Heart right ventricle (tissue), 16 donors: ENCODE measurements at regions of chr9 and their contacts with region 1.

Region 1: GRCh38 chr9:130932255-130933079 is 6.6 kb downstream of the FIBCD1 start:
- DNase-seq: peak; percentile 74 to 79
- ATAC-seq: peak; percentile 90 to 97 (median 91)
- H3K4me3 ChIP-seq: peak overlapping the region in 3 of 10 donors; percentile 12 to 19 (median 15)
- H3K27ac ChIP-seq: peak overlapping the region; percentile 43 to 83 (median 76)
- H3K4me1 ChIP-seq: peaks cover 0 to 47% (median 14%) of the 10 kb centered on the region in 9 donors
- H3K27me3 ChIP-seq: peaks cover 12 to 68% (median 51%) of the 10 kb centered on the region in 7 donors
- CTCF ChIP-seq: peak in 8 of 9 donors; percentile 24 to 61 (median 38)

Region 2: DNA sequence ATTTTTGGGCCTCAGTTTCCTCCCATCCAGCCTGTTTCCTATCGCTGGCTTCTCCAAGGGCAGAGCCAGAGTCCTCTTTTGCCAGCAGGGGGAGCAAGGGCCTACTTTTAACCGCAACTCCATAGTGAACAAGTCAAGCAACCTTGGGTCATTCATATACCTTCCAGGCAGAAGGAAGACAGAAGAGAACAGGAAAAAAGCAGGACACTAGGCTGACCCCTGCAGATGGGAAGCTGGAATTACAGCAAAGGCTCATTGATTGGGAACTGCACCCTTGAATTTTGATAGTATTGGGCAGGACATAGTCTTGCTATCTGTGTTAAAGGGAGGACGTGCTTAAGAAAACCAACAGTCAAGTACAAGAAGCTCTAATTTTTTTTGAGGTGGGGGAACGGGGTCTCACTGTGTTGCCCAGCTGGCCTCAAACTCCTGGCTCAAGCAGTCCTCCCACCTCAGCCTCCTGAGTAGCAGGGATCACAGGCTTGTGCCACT is 65.9 kb before region 1 on chr9:
- intact Hi-C with region 1: loop called in 8 of 10 experiments (anchors 1 to 5 kb)
- DNase-seq: peak in 1 of 2 donors; percentile 75
- ATAC-seq: peak in 5 of 8 donors; percentile 43 to 56 (median 47)
- H3K4me3 ChIP-seq: no peak overlapping the region
- H3K27ac ChIP-seq: peak overlapping the region in 1 of 10 donors; percentile 2
- H3K4me1 ChIP-seq: peaks cover 0 to 74% (median 36%) of the 10 kb centered on the region in 9 donors
- H3K27me3 ChIP-seq: no peaks in the 10 kb centered on the region
- CTCF ChIP-seq: peak; percentile 63 to 85 (median 77)

Region 3: DNA sequence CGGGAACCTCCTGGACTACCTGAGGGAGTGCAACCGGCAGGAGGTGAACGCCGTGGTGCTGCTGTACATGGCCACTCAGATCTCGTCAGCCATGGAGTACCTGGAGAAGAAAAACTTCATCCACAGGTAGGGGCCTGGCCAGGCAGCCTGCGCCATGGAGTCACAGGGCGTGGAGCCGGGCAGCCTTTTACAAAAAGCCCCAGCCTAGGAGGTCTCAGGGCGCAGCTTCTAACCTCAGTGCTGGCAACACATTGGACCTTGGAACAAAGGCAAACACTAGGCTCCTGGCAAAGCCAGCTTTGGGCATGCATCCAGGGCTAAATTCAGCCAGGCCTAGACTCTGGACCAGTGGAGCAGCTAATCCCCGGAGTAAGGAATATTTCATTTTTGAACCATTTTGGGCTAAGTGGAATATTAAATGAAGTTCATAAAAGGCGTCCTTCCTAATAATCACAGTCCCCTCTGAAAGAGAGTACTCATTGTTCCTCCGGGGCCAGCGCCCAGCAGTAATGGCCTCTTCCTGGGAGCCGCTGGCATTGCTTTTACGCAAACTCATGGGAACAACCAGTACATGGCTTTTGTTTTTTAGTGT is 59.5 kb before region 1 on chr9:
- intact Hi-C with region 1: loop called in 9 of 10 experiments (anchors 1 to 5 kb)
- DNase-seq: peak; percentile 66 to 74
- ATAC-seq: peak; percentile 47 to 79 (median 68)
- H3K4me3 ChIP-seq: no peak overlapping the region
- H3K27ac ChIP-seq: peak overlapping the region; percentile 27 to 87 (median 69)
- H3K4me1 ChIP-seq: peaks cover 5 to 58% (median 42%) of the 10 kb centered on the region in 9 donors
- H3K27me3 ChIP-seq: no peaks in the 10 kb centered on the region
- CTCF ChIP-seq: no peak